ENCODE measurements at regions of chr5 and their contacts with region 1.

Region 1: GRCh38 chr5:146965761-146966659 is 87.5 kb upstream of the PPP2R2B start:
- ATAC-seq: peak; percentile 86 to 94 (median 91)
- H3K4me3 ChIP-seq: no peak overlapping the region
- H3K27ac ChIP-seq: no peak overlapping the region
- H3K4me1 ChIP-seq: peaks cover 11 to 15% of the 10 kb centered on the region in 2 donors

Region 2: DNA sequence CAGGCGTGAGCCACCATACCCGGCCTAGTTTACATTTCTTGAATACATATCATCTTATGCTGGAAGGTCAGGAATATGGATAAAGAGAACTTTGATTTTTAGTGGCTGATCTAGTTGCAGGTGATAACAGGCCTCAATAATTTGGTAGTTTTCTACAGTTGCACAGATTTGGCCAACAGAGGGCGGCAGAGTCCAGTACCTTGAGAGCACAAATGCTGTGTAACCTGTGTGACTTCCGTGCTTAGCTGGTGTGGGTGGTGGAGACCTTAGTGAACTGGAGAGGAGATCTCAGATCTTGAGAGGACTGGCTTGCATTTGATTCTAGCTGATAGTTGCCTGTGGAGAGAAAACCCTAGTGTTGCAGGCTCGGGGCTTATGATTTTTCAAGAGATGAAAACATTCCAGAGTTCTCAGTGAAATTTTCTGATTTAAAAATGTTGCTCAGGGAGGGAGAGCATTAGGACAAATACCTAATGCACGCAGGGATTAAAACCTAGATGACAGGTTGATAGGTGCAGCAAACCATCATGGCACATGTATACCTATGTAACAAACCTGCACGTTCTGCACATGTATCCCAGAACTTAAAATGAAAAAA is 432.7 kb before region 1 on chr5:
- in situ Hi-C with region 1: loop called in 5 of 9 experiments (anchors 10 to 25 kb)
- ATAC-seq: peak; percentile 69 to 94 (median 81)
- H3K4me3 ChIP-seq: no peak overlapping the region
- H3K27ac ChIP-seq: no peak overlapping the region
- H3K4me1 ChIP-seq: peaks cover 2 to 4% of the 10 kb centered on the region in 2 donors

Region 3: DNA sequence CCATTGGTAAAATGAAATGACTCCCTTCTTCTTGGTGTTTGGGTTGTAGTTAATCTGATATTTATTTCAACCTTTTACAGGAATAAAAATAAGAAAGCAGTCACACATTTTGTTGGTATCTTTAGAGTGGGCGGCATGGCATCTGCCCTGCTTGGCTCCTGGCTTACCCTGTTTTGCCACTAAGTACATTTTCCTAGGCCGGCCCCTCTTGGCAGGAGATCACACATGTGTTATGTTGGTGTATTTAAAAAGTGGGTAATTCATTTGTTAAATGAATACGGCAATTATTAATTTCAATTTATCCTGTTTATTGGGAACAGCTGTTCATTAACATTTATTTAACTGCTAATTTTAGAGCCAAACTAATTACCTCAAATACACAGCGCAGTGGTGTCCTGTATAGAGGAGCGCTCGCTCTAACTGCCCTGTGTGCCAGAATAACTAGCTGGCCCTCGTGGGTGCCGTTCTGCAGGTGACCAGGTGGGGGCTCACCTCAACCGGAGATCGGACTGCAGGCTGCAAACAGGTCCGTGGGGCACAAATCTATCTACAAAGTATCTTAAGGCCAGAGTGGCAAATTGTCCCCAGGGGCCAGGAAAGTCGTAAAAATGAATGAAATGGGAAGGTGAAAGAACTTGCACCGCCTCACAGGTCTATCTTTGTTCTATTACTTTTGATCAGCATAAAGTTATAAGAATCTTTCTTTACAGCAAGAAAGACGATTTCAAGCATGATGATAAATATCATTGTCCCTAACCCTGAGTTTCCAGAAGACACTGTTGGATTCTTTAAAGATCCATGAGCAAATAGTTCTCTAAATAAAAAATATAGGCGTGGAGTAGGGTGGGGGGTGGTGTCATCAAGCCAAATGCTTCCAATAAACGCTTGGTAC is 423.8 kb before region 1 on chr5:
- in situ Hi-C with region 1: loop called (anchors 10 to 25 kb)
- ATAC-seq: peak; percentile 80 to 99 (median 86)
- H3K4me3 ChIP-seq: no peak overlapping the region
- H3K27ac ChIP-seq: no peak overlapping the region
- H3K4me1 ChIP-seq: peaks cover 8 to 10% of the 10 kb centered on the region in 2 donors

Region 4: DNA sequence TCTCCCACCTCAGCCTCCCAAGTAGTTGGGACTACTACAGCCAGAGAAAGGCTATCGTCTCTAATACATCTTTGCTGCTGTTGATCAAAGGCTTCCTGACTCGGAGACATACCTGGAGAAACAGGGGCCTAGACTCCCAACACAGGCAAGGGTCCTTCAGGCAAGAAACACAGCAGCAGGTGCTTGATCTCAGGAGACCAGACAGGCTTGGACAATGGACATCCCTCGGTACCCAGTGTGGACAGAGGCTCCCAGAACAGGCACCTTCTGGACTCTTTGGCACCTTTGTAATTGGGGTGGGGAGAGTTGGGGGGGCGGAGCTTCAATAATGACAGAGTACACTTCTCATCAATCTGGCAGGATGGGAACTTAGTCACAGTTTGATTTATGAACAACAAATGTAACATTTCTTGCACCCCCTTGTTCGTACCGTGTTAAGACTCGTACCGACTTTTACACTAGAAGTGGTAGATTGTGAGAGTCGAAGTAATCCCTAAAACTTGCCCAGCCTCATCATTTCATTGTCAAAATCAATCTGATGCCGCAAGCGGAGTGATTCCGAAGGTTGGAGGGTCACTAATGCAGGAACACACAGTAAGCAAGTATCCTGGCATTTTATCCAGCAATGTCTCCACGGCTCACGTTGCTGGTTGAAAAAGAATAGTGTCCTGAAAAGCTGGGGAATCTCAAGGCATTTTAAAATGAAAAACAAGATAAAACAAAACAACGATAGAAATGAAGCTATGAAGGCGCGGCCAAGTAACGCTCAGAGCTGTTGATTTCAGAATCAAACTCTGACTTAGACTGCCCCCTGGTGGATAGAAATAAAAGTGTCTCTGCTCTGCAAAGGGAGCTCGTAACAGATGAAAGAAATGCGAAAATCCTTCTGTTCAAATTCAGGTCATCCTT is 222.4 kb after region 1 on chr5:
- in situ Hi-C with region 1: loop called in 4 of 9 experiments (anchors 25 kb)
- ATAC-seq: peak; percentile 56 to 78 (median 71)
- H3K4me3 ChIP-seq: no peak overlapping the region
- H3K27ac ChIP-seq: no peak overlapping the region
- H3K4me1 ChIP-seq: peaks cover 12 to 16% of the 10 kb centered on the region in 2 donors

Region 5: GRCh38 chr5:147369742-147370374 is 403.8 kb after region 1 on chr5:
- in situ Hi-C with region 1: loop called in 1 of 9 experiments (anchors 25 kb)
- ATAC-seq: peak in 2 of 8 experiments; percentile 44 to 51
- H3K4me3 ChIP-seq: no peak overlapping the region
- H3K27ac ChIP-seq: no peak overlapping the region
- H3K4me1 ChIP-seq: no peaks in the 10 kb centered on the region

Region 6: GRCh38 chr5:147407094-147407681 is 441.2 kb after region 1 on chr5:
- in situ Hi-C with region 1: no loop called
- ATAC-seq: peak in 3 of 8 experiments; percentile 40 to 71 (median 66)
- H3K4me3 ChIP-seq: no peak overlapping the region
- H3K27ac ChIP-seq: no peak overlapping the region
- H3K4me1 ChIP-seq: peaks cover 0 to 7% of the 10 kb centered on the region in 2 donors